ENCODE measurements at regions of chr13 and their contacts with region 1.

Region 1: DNA sequence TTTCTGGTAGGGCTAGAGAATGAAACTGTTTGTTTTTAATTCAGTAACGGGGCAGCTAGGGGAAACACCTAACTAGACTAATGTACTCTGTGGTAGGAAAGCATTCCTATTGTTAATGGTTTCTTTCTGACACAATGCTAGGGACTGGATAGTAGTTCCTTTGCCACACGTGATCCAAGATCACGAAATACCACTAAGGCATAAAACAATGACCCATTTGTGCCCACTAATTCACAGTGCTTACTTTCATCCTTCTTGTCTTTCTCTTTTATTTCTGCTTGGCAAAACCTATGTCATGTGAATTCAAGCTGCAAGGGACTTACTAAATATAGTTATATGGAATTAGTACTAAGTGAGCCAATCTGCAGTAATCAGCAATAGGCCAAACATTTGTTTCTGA is 834.1 kb upstream of the SLITRK6 start:
- DNase-seq: no peak
- H3K4me3 ChIP-seq: no peak overlapping the region
- H3K27ac ChIP-seq: no peak overlapping the region
- H3K4me1 ChIP-seq: no peaks in the 10 kb centered on the region
- H3K27me3 ChIP-seq: no peaks in the 10 kb centered on the region
- CTCF ChIP-seq: no peak
- EP300 ChIP-seq: no peak
- POLR2A ChIP-seq: no peak

Region 2: DNA sequence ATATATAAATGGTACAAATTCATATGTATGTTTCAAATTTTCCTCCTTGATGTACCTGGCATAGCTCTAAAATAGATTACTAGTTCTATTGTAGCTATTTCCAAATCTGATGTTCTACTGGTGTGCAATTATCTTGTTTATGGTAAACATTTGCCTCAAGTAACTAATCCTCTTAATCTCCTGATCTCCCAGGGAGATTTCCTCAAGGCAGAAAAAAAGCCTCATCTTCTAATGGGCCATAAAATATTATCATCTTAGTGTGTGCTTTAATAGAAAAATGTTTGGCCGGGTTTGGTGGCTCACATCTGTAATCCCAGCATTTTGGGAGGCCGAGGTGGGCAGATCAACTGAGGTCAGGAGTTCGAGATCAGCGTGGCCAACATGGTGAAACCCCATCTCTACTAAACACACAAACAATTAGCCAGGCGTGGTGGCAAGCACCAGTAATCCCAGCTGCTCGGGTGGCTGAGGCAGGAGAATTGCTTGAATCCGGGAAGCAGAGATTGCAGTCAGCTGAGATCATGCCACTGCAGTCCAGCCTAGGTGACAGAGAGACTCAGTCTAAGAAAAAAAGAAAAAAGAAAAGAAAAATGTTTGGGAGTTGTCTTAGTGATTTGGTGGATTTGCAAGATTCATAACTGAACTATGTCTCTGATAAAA is 539.0 kb after region 1 on chr13:
- in situ Hi-C with region 1: no loop called
- intact Hi-C with region 1: loop called (anchors 10 kb)
- DNase-seq: no peak
- H3K4me3 ChIP-seq: no peak overlapping the region
- H3K27ac ChIP-seq: no peak overlapping the region
- H3K4me1 ChIP-seq: no peaks in the 10 kb centered on the region
- H3K27me3 ChIP-seq: no peaks in the 10 kb centered on the region
- CTCF ChIP-seq: no peak
- EP300 ChIP-seq: no peak
- POLR2A ChIP-seq: no peak

Measured in transverse colon (tissue), 4 donors.